A673 (cell line): ENCODE measurements at regions of chr12 and their contacts with region 1.

Region 1: GRCh38 chr12:118330421-118331018 is 42.2 kb downstream of the TAOK3 start:
- DNase-seq: peak; percentile 76
- H3K4me3 ChIP-seq: no peak overlapping the region
- H3K27ac ChIP-seq: peak overlapping the region; percentile 70
- H3K4me1 ChIP-seq: peaks cover 73% of the 10 kb centered on the region
- H3K27me3 ChIP-seq: no peaks in the 10 kb centered on the region
- CTCF ChIP-seq: no peak

Region 2: DNA sequence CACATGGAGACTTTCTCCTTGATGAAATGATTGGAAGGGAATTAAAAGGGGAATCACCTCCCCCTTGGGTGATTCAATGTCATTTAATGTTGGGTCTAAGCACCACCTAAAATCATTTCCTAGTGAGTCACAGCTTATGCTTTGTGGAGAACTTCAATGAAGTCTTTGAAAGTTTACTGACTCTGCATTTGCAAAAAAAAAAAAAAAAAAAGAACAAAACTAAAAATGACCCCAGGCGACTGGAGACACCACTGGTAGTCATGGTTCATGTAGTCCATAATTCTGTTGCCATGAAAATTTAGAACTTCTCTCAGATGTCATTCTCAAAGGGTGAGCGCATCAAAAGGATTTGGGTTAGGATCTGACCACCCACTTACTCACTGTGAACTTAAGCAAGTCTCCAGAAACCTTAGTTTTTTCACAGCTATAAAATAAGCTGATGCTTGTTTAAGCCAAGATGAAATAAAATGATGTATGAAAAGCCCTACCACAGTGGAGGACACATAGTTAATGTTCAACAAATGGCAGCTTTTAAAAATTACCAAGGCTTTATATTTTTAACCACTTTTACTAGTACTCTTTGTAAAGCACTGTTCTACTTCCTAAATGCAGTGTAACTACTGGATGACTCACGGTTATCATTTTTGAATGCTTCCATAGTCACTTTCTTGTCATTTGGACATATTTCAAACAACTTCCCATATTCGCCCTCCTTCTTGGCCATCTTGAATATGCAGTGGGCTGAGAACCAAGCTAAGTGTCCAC is 343.6 kb before region 1 on chr12:
- CTCF ChIA-PET with region 1: no interaction called
- POLR2A ChIA-PET with region 1: interaction called, 13 read pairs
- intact Hi-C with region 1: no loop called
- DNase-seq: peak; percentile 7
- H3K4me3 ChIP-seq: no peak overlapping the region
- H3K27ac ChIP-seq: no peak overlapping the region
- H3K4me1 ChIP-seq: no peaks in the 10 kb centered on the region
- H3K27me3 ChIP-seq: no peaks in the 10 kb centered on the region
- CTCF ChIP-seq: no peak

Region 3: DNA sequence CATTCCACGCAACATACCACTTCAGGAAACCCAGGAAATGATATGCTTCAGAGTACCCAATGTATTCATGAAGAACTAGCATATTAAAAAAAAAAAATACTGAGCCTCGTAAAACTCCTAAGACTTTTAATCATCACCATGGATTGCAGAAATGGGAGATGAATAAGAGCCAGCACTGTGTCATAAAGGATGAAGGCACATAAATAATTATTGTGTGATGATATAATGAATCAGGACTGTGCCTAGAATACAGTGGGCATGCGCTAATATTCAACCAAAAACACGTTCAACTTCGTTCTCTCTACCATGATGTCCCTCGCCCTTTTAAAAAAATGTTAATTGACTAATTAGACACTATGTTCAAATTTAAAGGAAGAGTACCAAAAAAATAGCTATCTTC is 1477.9 kb after region 1 on chr12:
- CTCF ChIA-PET with region 1: no interaction called
- POLR2A ChIA-PET with region 1: no interaction called
- intact Hi-C with region 1: no loop called
- DNase-seq: no peak
- H3K4me3 ChIP-seq: no peak overlapping the region
- H3K27ac ChIP-seq: no peak overlapping the region
- H3K4me1 ChIP-seq: no peaks in the 10 kb centered on the region
- H3K27me3 ChIP-seq: no peaks in the 10 kb centered on the region
- CTCF ChIP-seq: no peak